H1 (cell line): ENCODE measurements at regions of chr19 and their contacts with region 1.

Region 1: DNA sequence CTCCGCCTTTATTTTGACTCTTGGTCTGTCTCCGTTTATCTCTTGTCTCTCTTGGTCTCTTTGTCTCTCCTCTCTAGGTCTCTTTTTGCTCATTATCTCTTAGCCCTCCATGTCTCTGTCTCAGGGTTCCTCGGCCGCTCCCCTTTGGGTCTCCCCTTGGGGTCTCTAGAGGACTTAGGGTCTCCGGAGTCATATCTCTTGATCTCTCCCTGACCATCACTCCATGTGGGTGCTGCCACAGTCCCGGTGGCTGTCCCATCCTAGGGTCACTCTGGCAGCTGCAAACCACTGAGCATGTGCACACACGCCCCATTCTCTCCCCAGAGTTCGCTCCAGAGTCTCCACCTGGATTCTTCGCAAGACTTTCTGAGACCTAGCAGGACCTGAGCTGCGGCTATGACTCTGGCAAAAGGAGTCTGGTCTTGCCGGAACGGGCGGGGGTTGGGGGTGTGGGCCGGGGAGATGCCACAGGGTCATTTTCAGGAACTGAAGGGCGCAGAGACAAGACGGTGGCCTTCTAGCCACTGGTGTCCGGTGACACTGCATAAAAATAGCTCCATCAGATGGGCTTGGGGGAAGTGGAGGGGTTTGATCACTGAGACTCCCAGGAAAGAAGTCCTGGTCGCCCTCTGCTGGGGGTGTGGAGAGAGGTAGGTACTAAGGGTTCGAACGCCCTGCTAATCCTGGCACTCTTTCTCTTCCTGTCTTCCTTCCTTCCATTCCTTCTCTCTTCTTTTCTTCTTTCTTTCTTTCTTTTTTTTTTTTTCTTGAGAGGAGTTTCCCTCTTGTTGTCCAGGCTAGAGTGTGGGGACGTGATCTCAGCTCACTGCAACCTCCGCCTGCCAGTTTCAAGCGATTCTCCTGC is 1.2 kb upstream of the KCNA7 start:
- DNase-seq: peak in 1 of 2 experiments; percentile 60
- H3K4me3 ChIP-seq: no peak overlapping the region
- H3K27ac ChIP-seq: no peak overlapping the region
- H3K4me1 ChIP-seq: peaks cover 0 to 2% (median 0%) of the 10 kb centered on the region in 4 experiments; a peak in 2 of 7 replicates
- H3K27me3 ChIP-seq: peaks cover 26 to 49% (median 47%) of the 10 kb centered on the region in 4 experiments
- CTCF ChIP-seq: peak; percentile 57 to 64 (median 61)
- EP300 ChIP-seq: no peak
- POLR2A ChIP-seq: no peak
- RAD21 ChIP-seq: peak; percentile 40 to 43

Region 2: GRCh38 chr19:49042177-49042576 is 31.6 kb before region 1 on chr19:
- CTCF ChIA-PET with region 1: no interaction called
- POLR2A ChIA-PET with region 1: no interaction called
- DNase-seq: no peak
- H3K4me3 ChIP-seq: no peak overlapping the region
- H3K27ac ChIP-seq: no peak overlapping the region
- H3K4me1 ChIP-seq: no peaks in the 10 kb centered on the region
- H3K27me3 ChIP-seq: no peaks in the 10 kb centered on the region
- CTCF ChIP-seq: no peak
- EP300 ChIP-seq: no peak
- POLR2A ChIP-seq: no peak
- RAD21 ChIP-seq: no peak

Region 3: DNA sequence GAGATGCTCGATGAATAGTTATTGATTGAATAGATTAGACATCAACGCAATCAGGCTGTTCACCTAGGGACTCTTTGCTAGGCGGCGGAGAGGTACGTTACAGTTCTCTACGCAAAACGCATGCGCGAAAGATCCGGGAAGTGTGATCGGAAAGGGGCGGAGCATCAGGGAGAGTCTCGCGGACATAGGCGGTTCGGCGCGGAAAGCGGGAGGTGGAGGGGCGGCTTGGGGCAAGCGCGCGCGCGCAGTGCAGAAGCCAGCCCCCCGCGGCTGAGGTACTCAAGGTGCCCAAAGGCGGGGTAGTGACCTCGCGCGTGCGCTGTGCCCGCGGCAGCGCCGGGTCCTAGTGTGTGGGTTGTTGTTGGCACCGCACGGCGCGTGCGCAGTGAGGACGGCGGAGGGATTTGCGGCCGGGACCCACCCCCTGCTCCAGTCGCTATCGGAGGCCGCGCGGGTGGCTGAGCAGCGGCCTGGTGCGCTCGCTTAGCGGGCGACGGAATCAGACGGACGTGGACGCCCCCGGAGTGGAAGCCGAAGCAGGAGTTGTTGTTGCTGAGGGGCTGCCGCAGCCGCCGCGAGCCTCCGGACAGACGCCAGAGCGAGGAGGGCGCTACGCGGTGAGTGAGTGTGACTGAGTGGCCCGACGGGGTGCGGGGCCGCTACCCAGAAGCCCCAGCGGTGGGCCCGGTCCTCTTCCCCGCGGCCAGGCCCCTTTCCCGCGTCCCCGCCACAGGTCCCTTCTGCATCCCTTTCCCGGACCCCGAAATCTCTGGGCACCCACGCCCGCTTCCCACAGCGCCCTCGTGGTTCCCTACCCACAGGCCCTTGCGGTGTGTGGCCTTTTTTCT is 11.5 kb after region 1 on chr19 and contains the start of gene SNRNP70:
- CTCF ChIA-PET with region 1: interaction called, 12 read pairs
- POLR2A ChIA-PET with region 1: interaction called, 8 read pairs
- DNase-seq: peak; percentile 98 to 99
- H3K4me3 ChIP-seq: peak within 1 kb of the TSS; percentile 84 to 97 (median 90)
- H3K27ac ChIP-seq: peak within 1 kb of the TSS; percentile 94
- H3K4me1 ChIP-seq: peaks cover 4 to 6% (median 5%) of the 10 kb centered on the region in 4 experiments
- H3K27me3 ChIP-seq: peaks cover 0 to 3% (median 0%) of the 10 kb centered on the region in 4 experiments; a peak in 1 of 7 replicates
- CTCF ChIP-seq: 0 out of 4 replicates have a peak, but pooled peaks of 1 of the 3 experiments have one; percentile 3
- EP300 ChIP-seq: no peak; a peak in 1 of 3 replicates
- POLR2A ChIP-seq: peak; percentile 97 to 98
- RAD21 ChIP-seq: no peak
- total RNA-seq, gene SNRNP70: 231 and 244 TPM in 2 replicates